Endothelial cell of umbilical vein (primary cell): ENCODE measurements at regions of chr2 and their contacts with region 1.

Region 1: GRCh38 chr2:70948337-70949003 is 12.8 kb downstream of the ATP6V1B1 start:
- DNase-seq: peak; percentile 78
- H3K4me3 ChIP-seq: peak overlapping the region in 2 of 3 experiments; percentile 26 to 36
- H3K27ac ChIP-seq: no peak overlapping the region
- H3K4me1 ChIP-seq: peaks cover 13% of the 10 kb centered on the region
- H3K27me3 ChIP-seq: peaks cover 4 to 9% of the 10 kb centered on the region in 2 experiments
- CTCF ChIP-seq: peak; percentile 90 to 94
- POLR2A ChIP-seq: no peak

Region 2: DNA sequence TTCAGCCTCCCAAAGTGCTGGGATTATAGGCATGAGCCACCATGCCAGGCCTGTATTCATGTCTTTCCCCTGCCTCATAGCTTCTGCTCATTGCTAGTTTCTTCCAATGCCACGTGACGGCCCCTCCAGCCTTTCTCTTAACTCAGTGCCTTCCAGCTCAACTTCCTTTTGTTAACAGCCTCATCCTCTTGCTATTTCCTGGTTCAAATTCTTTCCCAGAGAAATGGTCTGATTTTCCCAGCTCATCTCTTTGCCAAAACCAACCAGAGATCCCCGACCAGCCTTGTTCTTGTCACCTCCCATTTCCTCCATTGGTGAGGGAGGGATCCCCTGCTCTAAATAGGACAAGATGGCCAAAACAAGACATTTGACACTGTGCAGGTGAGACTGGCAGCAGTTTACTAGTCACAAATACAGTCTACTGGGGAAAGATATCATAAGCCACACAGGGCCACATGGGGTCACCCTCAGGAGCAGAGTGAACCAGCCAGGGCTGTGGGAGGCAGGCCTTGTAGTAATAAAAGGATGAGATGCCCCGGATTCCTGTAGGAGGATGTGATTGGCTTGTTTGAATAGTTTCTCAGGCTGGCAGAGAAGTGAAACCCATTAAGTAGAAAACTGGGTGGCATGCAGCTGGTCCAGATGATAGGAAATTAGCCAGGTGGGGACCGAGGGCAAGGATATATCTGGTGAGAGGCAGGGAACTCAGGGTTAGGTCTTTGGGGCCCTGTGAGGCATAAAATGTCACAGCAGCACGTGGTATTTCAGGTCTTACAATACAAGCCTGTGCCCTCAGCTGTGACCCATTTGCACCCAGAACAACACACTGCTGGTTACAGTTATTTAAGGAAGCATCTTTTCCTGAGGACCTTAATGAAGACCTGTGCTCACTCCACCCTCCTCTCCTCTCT is 119.3 kb before region 1 on chr2:
- CTCF ChIA-PET with region 1: interaction called, 13 read pairs
- POLR2A ChIA-PET with region 1: no interaction called
- dilution Hi-C with region 1: no loop called
- intact Hi-C with region 1: no loop called
- DNase-seq: peak; percentile 91
- H3K4me3 ChIP-seq: no peak overlapping the region
- H3K27ac ChIP-seq: peak overlapping the region; percentile 87
- H3K4me1 ChIP-seq: peaks cover 20% of the 10 kb centered on the region
- H3K27me3 ChIP-seq: no peaks in the 10 kb centered on the region
- CTCF ChIP-seq: no peak
- POLR2A ChIP-seq: no peak

Region 3: DNA sequence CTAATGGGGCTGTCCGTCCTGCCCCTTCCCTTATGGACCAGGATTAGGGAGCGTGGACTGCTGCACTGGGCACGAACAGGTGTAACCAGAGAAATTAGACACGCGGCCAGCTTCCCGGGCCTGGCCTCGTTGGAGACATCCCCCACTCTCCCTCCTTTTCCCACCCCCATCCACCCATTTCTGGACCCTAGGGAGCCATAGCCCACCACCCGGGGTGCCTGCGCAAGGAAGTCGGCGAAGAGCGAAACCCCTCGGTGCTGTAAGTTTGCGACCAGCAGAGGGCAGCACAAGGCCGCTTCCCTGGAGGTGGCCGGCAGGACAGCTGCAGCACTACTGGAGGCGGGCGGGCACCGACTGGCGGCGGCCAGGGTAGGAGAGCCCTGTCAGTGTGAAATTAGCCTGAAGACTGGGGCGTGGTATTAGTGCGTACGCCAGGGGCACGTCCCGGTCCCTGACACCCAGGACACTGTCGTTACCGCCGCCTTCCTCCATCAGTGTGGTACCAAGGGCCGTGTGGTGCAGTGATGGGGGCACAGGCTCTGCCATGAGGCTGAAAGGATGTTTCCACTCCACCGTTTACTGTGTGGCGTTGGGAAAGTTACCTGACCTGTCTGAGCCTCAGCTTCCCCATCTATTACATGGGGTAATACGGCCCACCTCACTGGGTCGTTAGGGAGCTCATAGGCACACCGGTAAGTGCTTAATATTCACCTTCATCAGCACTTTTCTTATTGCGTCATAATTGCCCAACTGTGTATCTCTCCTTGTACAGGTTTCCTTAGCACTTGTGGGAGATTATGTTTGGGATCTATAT is 76.9 kb before region 1 on chr2:
- CTCF ChIA-PET with region 1: interaction called, 328 read pairs
- POLR2A ChIA-PET with region 1: no interaction called
- dilution Hi-C with region 1: no loop called
- intact Hi-C with region 1: loop called (anchors 1 kb)
- DNase-seq: peak; percentile 77
- H3K4me3 ChIP-seq: no peak overlapping the region
- H3K27ac ChIP-seq: no peak overlapping the region
- H3K4me1 ChIP-seq: peaks cover 2% of the 10 kb centered on the region
- H3K27me3 ChIP-seq: peaks cover 15 to 27% of the 10 kb centered on the region in 2 experiments
- CTCF ChIP-seq: peak; percentile 95
- POLR2A ChIP-seq: no peak

Region 4: DNA sequence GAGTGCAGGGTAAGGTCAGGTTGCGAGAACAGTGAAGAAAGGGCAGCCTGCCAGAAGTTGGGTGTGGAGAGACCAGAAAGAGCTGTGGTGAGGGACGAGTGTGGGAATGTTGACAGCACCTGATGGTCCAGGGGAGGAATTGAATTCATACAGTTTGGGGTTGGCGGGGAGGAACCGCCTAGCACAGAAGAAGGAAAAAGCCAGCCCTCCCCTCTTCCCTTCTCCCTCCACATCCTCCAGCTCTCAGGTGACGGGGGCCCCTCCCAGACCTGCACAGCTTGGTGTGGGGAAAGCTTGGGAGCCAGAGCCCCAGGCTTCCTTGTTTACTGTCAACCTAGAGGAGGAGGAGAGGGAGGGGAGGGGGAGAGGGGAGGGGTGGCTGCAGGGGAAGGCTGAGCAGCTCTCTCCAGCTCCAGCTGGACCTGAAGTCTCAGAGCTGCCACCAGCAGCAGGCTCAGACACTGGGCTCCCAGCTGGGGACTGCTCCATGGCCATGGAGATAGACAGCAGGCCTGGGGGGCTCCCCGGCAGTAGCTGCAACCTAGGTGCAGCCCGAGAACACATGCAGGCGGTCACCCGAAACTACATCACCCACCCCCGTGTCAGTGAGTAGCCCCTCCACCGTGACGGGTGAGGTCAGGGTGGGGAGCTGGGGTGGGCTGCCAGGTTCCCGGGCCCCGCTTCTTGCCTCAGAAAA is 12.9 kb before region 1 on chr2 and contains the start of gene ATP6V1B1:
- CTCF ChIA-PET with region 1: interaction called, 29 read pairs
- POLR2A ChIA-PET with region 1: interaction called, 3 read pairs
- dilution Hi-C with region 1: no loop called
- intact Hi-C with region 1: no loop called
- DNase-seq: no peak
- H3K4me3 ChIP-seq: no peak within 1 kb of the TSS
- H3K27ac ChIP-seq: no peak within 1 kb of the TSS
- H3K4me1 ChIP-seq: no peaks in the 10 kb centered on the region
- H3K27me3 ChIP-seq: peaks cover 0 to 11% of the 10 kb centered on the region in 2 experiments
- CTCF ChIP-seq: no peak
- POLR2A ChIP-seq: no peak
- total RNA-seq, gene ATP6V1B1: 0.60 and 0.77 TPM in 2 replicates

Region 5: DNA sequence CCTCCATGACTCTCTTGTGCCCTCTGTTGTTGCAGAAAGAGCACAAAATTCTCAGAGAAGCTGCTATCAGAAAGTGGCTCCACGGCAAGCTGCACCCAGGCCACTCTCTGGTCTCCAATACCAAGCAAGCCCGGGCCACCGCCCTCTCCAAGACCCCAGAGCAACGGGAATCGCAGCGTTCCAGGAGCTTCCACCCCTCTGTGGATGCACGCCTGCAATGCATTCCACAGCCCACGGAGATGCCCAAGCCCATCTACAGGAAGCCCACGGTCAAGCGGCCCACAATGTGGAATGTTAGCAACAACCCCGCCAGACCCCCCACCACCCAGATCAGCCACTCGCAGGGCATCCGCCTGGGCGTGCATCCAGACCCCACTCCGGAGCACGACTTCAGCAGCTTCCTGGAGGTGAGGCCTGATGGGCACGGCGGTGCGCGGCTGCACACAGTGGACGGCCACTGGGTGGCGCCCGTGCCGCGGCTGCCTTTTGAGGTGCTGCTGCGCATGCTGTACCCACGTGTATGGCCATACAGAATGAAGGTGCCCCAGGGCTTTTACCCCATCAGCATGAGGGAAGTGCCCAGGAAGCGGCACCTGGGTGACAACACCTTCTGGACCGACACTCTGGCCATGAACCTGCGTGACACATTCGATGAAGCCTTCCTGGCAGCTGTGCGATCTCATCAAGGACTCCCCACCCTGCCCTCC is 36.3 kb after region 1 on chr2:
- CTCF ChIA-PET with region 1: interaction called, 13 read pairs
- POLR2A ChIA-PET with region 1: no interaction called
- dilution Hi-C with region 1: no loop called
- intact Hi-C with region 1: no loop called
- DNase-seq: peak; percentile 58
- H3K4me3 ChIP-seq: no peak overlapping the region
- H3K27ac ChIP-seq: no peak overlapping the region
- H3K4me1 ChIP-seq: no peaks in the 10 kb centered on the region
- H3K27me3 ChIP-seq: no peaks in the 10 kb centered on the region
- CTCF ChIP-seq: peak; percentile 94 to 96
- POLR2A ChIP-seq: no peak